GM18951 (cell line): ENCODE measurements at regions of chr21 and their contacts with region 1.

Region 1: DNA sequence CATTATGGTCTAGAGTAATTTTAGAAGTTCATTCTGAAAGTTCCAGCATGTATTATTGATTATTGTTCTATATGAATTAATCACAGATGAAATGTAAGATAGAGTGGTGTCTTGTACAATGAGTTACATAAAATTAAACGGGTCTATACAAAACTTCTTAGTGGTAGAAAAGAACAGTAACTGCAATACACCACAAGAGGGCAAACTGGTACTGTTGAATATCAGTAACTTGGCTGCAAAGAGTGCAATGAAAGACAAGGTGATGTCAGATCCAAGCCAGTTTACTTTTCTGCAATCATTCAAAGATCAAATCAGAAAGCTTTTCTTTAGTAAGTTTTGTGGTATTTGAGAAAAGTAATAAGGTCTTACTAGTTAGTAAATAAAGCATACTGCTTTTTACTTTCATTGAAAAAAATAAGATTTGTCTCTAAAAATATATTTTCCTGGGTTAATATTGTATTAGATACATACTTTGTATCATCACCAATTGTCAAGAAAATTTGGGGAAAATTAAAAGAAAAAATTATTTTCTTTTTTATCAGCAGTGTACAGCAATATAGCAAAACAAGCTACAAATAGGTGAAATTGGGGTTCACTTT is 66.4 kb upstream of the BTG3 start:
- POLR2A ChIP-seq: no peak

Region 2: DNA sequence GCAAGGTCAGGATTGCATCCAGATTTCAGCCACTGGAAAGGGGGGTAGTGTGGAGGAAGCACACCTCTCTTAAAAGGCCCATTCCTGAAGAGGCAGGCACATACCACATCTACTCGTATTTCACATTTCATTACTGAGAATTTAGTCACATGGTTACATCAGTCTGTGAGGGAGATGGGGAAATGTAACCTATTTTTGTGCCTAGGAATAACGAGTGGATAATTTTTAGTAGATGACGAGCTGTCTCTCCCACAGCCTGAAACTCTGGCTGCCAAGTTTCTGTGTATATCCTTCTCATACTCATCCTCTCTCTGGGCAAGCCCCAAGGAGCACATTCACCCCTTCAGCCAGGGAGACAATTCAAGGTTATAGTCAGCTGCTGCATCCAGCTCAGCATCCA is 150.4 kb after region 1 on chr21:
- in situ Hi-C with region 1: no loop called
- POLR2A ChIP-seq: no peak

Region 3: DNA sequence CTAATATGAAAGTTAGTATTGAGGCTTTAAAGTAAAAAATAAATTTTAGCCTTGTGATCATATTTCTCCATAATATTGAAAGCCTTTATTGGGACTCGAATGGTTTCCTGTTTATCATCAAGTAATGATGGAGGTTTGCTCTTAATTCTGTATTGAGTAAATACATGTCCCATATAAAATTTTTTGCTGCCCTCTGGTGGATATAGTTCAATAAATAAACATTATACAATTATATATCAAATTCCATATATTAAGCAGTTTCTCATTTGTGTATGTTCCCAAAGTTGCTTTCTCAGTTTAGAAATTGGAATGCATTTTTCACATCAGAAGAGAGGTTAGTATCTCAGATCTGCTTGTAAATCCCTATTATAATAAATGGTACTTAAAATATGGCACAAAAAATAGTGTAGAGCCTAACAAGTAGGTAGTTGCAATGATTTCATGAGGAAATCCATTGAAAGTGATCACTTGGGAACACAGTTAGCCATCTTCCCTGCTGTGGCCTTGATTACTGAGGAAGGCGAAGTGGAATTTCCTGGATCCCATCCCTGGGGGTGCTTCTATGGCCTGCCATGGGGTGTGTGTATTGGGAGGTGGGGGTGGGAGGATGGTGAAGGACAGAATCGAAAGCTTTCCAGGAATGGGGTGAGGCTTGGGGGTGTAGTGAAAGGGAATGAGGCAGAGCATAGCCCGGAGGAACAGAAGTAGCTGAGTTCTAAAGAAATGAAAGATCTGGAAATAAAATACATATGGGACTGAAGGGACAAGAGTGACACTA is 224.1 kb after region 1 on chr21:
- in situ Hi-C with region 1: loop called (anchors 10 kb)
- POLR2A ChIP-seq: no peak